ENCODE measurements at regions of chr7 and their contacts with region 1.

Region 1: DNA sequence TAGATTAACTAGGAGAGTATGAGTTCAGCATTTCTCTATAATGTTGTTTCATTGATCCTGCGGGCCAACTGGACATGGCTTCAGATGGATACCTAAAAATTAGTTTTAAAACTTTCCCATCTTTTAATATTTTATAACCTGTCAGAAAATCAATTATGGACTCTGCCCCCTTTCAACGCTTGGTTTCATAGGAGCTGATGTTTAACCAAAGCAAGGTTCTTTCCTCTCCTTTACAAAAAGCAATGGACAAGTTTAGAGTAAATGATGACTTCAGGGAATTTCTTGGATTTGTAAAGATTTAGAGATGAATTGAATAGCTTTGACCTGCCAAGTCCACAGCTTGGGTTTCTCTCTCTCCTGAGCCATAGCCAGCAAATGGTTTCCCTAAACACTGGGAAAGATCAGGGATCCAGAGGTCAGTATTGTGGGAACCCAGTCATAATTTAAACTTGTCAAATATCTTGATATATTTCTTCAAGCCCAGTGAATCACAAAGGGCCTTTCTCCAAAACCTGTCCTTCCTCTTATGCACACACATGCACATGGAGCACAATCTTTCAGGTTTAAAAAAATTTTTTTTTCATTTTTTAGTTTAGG is 177.1 kb downstream of the EVX1 start:
- DNase-seq: no peak
- H3K4me3 ChIP-seq: no peak overlapping the region
- H3K27ac ChIP-seq: peak overlapping the region; percentile 75 to 80 (median 78)
- H3K4me1 ChIP-seq: peaks cover 0 to 58% (median 17%) of the 10 kb centered on the region in 4 donors
- H3K27me3 ChIP-seq: no peaks in the 10 kb centered on the region
- CTCF ChIP-seq: no peak
- EP300 ChIP-seq: no peak
- POLR2A ChIP-seq: no peak

Region 2: GRCh38 chr7:25844102-25844870 is 1575.4 kb before region 1 on chr7:
- in situ Hi-C with region 1: no loop called
- intact Hi-C with region 1: loop called (anchors 5 kb)
- DNase-seq: no peak
- H3K4me3 ChIP-seq: no peak overlapping the region
- H3K27ac ChIP-seq: peak overlapping the region in 1 of 4 donors; percentile 85
- H3K4me1 ChIP-seq: peaks cover 0 to 29% (median 11%) of the 10 kb centered on the region in 4 donors
- H3K27me3 ChIP-seq: no peaks in the 10 kb centered on the region
- CTCF ChIP-seq: no peak
- EP300 ChIP-seq: no peak
- POLR2A ChIP-seq: no peak